HepG2 (cell line): ENCODE measurements at regions of chr4 and their contacts with region 1.

Region 1: GRCh38 chr4:5399790-5400421 is 308.5 kb downstream of the EVC2 start:
- DNase-seq: peak; percentile 23
- ATAC-seq: peak; percentile 82
- H3K4me3 ChIP-seq: no peak overlapping the region
- H3K27ac ChIP-seq: no peak overlapping the region
- H3K4me1 ChIP-seq: no peaks in the 10 kb centered on the region
- H3K27me3 ChIP-seq: peaks cover 0 to 20% of the 10 kb centered on the region in 2 experiments; a peak in 2 of 5 replicates
- CTCF ChIP-seq: peak; percentile 64
- EP300 ChIP-seq: no peak
- POLR2A ChIP-seq: no peak
- RAD21 ChIP-seq: 0 out of 2 replicates have a peak, but pooled peaks have one; percentile 22

Region 2: DNA sequence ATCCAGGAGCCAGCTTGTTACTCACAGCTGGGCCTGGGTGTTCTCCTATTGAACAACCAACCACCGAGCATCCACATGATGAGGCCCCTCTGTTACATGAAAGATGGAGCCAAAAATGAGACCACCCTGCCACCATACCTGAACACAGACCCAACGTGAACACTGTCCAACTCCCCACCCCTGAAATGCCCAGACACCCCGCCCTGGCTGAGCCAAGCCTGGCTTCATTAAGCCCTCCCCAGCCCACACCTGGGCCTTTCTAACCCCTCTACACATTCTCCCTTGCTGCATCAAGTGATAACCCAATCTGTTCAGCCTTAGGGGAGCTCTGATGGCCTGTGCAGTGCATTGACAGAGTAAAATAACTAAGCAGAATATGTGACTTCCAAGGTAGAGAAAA is 391.7 kb after region 1 on chr4:
- CTCF ChIA-PET with region 1: interaction called, 12 read pairs
- POLR2A ChIA-PET with region 1: no interaction called
- in situ Hi-C with region 1: no loop called
- intact Hi-C with region 1: no loop called
- DNase-seq: no peak
- ATAC-seq: no peak
- H3K4me3 ChIP-seq: no peak overlapping the region
- H3K27ac ChIP-seq: no peak overlapping the region
- H3K4me1 ChIP-seq: no peaks in the 10 kb centered on the region
- H3K27me3 ChIP-seq: no peaks in the 10 kb centered on the region; a peak in 1 of 5 replicates
- CTCF ChIP-seq: no peak
- EP300 ChIP-seq: no peak
- POLR2A ChIP-seq: no peak
- RAD21 ChIP-seq: no peak

Region 3: DNA sequence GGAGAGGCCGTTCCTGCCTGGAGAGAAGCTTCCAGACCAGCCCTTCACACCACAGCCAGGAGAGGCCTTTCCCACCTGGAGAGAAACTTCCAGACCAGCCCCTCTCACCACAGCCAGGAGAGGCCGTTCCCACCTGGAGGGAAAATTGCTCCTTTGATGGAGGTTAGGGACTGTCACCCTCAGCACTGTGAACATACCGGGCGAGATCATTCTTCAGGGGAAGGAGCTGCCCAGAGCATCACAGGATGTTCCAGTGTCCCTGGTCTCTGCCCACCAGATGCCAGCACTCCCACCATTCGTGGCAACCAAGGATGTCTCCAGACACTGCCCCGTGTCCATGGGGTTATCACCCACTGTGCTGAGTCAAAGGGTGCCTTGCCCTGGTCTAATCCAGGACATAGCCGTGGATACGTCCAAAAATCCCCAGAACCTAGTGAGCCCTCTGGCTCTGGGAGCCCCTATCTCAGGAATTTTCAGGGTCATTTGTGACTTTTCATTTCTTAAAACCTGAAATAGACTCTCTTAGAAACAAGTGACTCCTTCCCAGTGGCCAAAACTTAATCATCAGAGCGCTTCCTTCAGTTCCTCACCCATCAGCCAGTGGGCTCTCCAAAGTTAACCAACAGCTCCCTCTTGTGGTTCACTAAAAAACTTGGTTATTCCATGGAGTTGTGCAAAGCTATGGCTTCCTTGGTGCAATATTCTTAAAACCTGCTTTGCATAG is 412.8 kb after region 1 on chr4:
- CTCF ChIA-PET with region 1: interaction called, 10 read pairs
- POLR2A ChIA-PET with region 1: no interaction called
- in situ Hi-C with region 1: no loop called
- intact Hi-C with region 1: no loop called
- DNase-seq: peak; percentile 58
- ATAC-seq: peak; percentile 86
- H3K4me3 ChIP-seq: no peak overlapping the region
- H3K27ac ChIP-seq: no peak overlapping the region
- H3K4me1 ChIP-seq: no peaks in the 10 kb centered on the region
- H3K27me3 ChIP-seq: no peaks in the 10 kb centered on the region; a peak in 1 of 5 replicates
- CTCF ChIP-seq: peak; percentile 72
- EP300 ChIP-seq: no peak
- POLR2A ChIP-seq: no peak
- RAD21 ChIP-seq: peak; percentile 45

Region 4: DNA sequence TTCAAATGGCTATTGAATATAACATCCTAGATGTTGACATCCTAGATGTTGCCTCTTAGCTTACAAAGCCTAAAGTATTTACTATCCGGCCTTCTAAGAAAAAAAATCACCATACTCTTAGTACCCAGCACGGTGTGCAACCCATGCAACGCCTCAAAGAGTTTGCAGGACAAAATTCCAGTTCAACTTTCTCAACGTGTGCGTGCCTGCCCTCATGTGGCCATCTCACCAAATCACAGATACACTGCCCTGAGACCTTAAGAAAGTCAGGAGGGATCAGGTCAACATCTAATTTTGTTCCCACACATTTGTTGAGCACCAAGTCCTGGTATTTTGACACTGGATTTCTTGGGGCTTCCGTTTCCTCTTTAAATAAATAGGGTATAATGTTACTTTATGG is 424.7 kb after region 1 on chr4:
- CTCF ChIA-PET with region 1: no interaction called
- POLR2A ChIA-PET with region 1: no interaction called
- in situ Hi-C with region 1: loop called (anchors 10 kb)
- intact Hi-C with region 1: no loop called
- DNase-seq: peak; percentile 18
- ATAC-seq: peak; percentile 75
- H3K4me3 ChIP-seq: no peak overlapping the region
- H3K27ac ChIP-seq: no peak overlapping the region
- H3K4me1 ChIP-seq: no peaks in the 10 kb centered on the region; the same call in 1 of the 2 replicates
- H3K27me3 ChIP-seq: no peaks in the 10 kb centered on the region
- CTCF ChIP-seq: peak; percentile 58
- EP300 ChIP-seq: no peak
- POLR2A ChIP-seq: no peak
- RAD21 ChIP-seq: no peak